ENCODE measurements at regions of chr15 and their contacts with region 1.

Region 1: DNA sequence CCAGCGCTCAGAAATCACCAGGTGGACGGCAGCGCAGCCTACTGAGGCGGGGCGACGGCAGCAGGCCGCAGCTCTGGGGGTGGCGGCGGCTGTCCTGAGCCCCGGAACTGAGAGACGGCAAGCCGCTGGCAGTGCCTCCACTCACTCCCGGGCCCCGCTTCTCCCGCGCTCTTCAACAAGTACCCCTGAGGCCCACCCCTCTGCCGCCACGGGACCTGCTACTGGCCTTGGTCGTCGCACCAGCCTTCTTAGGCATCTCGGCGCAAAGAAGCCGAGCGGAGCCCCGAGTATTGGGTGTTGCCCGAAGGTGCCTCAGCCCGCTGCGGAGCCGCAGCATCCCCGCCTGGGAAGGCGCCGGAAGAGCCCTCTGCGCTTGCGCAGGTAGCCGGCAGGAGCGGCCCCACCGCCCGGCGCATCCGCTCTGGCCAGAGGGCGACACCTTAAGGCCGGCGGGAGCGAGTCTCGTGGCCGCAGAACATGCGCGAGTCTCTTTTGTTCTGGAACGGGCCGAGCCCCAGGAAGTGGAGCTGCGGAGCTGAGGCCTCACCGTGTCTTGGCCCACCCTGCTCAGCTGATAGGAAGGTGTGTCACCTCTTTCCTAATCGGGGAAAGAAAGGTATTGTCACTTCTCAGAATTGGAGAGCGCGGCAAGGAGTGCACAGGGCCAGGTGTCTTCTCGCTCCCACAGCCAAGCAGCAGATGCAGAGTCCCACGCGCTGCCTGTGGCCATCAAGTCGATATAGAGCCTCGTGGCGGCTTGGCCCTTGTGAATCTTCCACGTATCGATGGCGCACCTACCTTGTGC is at the start of gene C15orf40:
- DNase-seq: peak; percentile 96
- H3K4me3 ChIP-seq: peak within 1 kb of the TSS; percentile 77 to 96 (median 91)
- H3K27ac ChIP-seq: peak within 1 kb of the TSS; percentile 80 to 88 (median 84)
- H3K4me1 ChIP-seq: peaks cover 20 to 29% (median 26%) of the 10 kb centered on the region in 4 donors
- H3K27me3 ChIP-seq: no peaks in the 10 kb centered on the region
- CTCF ChIP-seq: peak; percentile 70 to 82 (median 72)
- EP300 ChIP-seq: no peak
- POLR2A ChIP-seq: peak; percentile 76
- total RNA-seq, gene C15orf40: 7.0 to 11.8 (median 9.1) TPM

Region 2: GRCh38 chr15:82849556-82850512 is 161.6 kb before region 1 on chr15:
- intact Hi-C with region 1: loop called (anchors 5 kb)
- DNase-seq: peak; percentile 92
- H3K4me3 ChIP-seq: peak overlapping the region; percentile 2 to 30 (median 19)
- H3K27ac ChIP-seq: peak overlapping the region in 3 of 4 donors; percentile 32 to 51 (median 48)
- H3K4me1 ChIP-seq: peaks cover 6 to 15% (median 13%) of the 10 kb centered on the region in 4 donors
- H3K27me3 ChIP-seq: no peaks in the 10 kb centered on the region
- CTCF ChIP-seq: peak; percentile 54 to 69 (median 67)
- EP300 ChIP-seq: no peak
- POLR2A ChIP-seq: no peak

Region 3: GRCh38 chr15:83066734-83067637 is 55.5 kb after region 1 on chr15 and contains the start of gene BTBD1:
- intact Hi-C with region 1: loop called (anchors 2 kb)
- DNase-seq: peak; percentile 96
- H3K4me3 ChIP-seq: peak within 1 kb of the TSS; percentile 75 to 98 (median 79)
- H3K27ac ChIP-seq: peak within 1 kb of the TSS; percentile 90 to 98 (median 93)
- H3K4me1 ChIP-seq: peaks cover 29 to 48% (median 45%) of the 10 kb centered on the region in 4 donors
- H3K27me3 ChIP-seq: no peaks in the 10 kb centered on the region
- CTCF ChIP-seq: peak in 1 of 3 experiments; percentile 14
- EP300 ChIP-seq: no peak
- POLR2A ChIP-seq: peak; percentile 90
- total RNA-seq, gene BTBD1: 53.2 to 69.6 (median 64.2) TPM

Region 4: DNA sequence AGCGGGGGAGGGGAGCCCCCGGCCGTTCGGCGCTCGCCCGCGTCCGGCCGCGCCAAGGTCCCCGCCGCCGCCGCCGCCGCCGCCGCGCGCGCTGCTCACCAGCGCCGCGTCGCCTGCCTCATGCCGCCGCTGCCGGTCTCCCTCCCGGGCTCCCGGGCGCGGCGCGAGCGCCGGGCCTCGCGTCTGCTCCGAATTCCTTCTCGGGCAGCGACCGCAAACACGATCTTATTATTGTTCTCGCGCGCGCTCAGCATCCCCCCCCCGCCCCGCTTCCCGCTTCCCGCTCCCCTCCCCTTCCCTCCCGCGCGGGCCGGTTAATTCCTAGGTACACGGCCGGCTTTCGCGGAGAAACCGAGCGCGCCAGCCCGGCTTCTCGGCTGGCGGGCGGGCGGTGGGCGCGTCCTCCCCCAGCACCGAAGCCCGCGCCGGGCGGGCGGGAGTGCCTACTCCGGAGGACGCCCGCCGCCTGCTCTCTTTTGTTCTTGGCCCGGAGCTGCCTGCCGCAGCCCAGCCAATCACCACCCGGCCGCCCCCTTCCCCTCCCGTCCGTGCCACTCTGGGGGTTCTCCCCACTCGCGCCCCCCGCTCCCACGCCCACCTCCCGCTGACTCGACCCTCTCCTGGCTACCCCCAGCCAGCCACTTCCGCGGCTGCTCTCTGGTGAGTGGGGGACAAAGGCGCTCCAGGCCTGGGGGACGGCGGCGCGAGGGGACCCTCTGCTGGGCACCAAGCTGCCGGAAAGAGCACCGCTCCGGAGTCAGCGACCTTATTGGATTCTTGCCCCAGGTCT is 196.3 kb after region 1 on chr15 and contains the start of gene HDGFL3:
- intact Hi-C with region 1: loop called (anchors 5 kb)
- DNase-seq: no peak
- H3K4me3 ChIP-seq: peak within 1 kb of the TSS; percentile 88 to 96 (median 91)
- H3K27ac ChIP-seq: peak within 1 kb of the TSS; percentile 91 to 96 (median 94)
- H3K4me1 ChIP-seq: peaks cover 16 to 34% (median 34%) of the 10 kb centered on the region in 4 donors
- H3K27me3 ChIP-seq: no peaks in the 10 kb centered on the region
- CTCF ChIP-seq: no peak
- EP300 ChIP-seq: no peak
- POLR2A ChIP-seq: no peak
- total RNA-seq, gene HDGFL3: 38.1 to 72.6 (median 47.9) TPM